Activated CD8-positive, alpha-beta memory T cell treated with anti-CD3 and anti-CD28 coated beads, Interleukin-2, amount 10 ng/mL, durations not matched to agents 7 days and 5 days (primary cell): ENCODE measurements at regions of chr17 and their contacts with region 1.

Region 1: GRCh38 chr17:4709794-4710692 is at the start of gene ARRB2:
- DNase-seq: peak; percentile 99
- ATAC-seq: peak; percentile 85
- H3K4me3 Mint-ChIP-seq: peak within 1 kb of the TSS; percentile 95
- H3K27ac Mint-ChIP-seq: peak within 1 kb of the TSS; percentile 97
- H3K4me1 Mint-ChIP-seq: peaks cover 61% of the 10 kb centered on the region
- H3K27me3 Mint-ChIP-seq: no peaks in the 10 kb centered on the region
- total RNA-seq, gene ARRB2: 348 to 365 TPM

Region 2: GRCh38 chr17:4696437-4696805 is 13.6 kb before region 1 on chr17:
- CTCF ChIA-PET with region 1: interaction called, 16 read pairs
- DNase-seq: peak; percentile 67
- ATAC-seq: peak; percentile 95
- H3K4me3 Mint-ChIP-seq: peak overlapping the region; percentile 67
- H3K27ac Mint-ChIP-seq: peak overlapping the region; percentile 88
- H3K4me1 Mint-ChIP-seq: peaks cover 34% of the 10 kb centered on the region
- H3K27me3 Mint-ChIP-seq: no peaks in the 10 kb centered on the region

Region 3: DNA sequence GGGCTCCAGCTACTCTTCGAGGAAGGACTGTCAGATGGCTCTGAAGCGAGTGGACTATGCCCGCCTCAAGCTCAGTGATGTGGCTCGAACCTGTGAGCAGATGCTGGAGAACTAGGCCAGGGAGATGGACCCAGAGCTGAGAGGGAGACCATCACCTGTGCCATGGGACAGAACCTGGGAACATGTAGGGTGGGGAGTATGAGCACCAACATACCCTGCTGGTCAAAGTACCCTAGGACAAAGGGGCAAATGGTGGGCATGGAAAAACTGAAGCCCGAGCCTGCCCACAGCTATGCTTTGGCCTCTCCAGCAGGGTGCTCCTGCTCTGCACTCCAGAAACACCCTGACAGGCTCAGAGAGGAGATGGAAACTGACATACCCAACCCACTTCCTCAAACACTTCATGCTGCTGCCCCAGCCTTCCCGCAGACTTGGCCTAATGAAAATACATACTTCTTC is 23.1 kb after region 1 on chr17:
- CTCF ChIA-PET with region 1: interaction called, 16 read pairs
- DNase-seq: no peak
- ATAC-seq: no peak
- H3K4me3 Mint-ChIP-seq: peak overlapping the region; percentile 91
- H3K27ac Mint-ChIP-seq: no peak overlapping the region
- H3K4me1 Mint-ChIP-seq: peaks cover 47% of the 10 kb centered on the region
- H3K27me3 Mint-ChIP-seq: peaks cover 4% of the 10 kb centered on the region